WTC11 (cell line): ENCODE measurements at regions of chr5 and their contacts with region 1.

Region 1: GRCh38 chr5:6820851-6821479 is 107.7 kb downstream of the TENT4A start:
- DNase-seq: peak; percentile 83
- ATAC-seq: peak; percentile 77
- H3K4me3 Mint-ChIP-seq: no peak overlapping the region
- H3K27ac Mint-ChIP-seq: no peak overlapping the region
- H3K4me1 Mint-ChIP-seq: peaks cover 17% of the 10 kb centered on the region
- H3K27me3 Mint-ChIP-seq: no peaks in the 10 kb centered on the region; the same call in 1 of the 2 replicates
- CTCF ChIP-seq: peak; percentile 90

Region 2: GRCh38 chr5:6783787-6784186 is 37.2 kb before region 1 on chr5:
- CTCF ChIA-PET with region 1: interaction called, 11 read pairs
- POLR2A ChIA-PET with region 1: no interaction called
- DNase-seq: no peak
- ATAC-seq: no peak
- H3K4me3 Mint-ChIP-seq: no peak overlapping the region
- H3K27ac Mint-ChIP-seq: no peak overlapping the region
- H3K4me1 Mint-ChIP-seq: no peaks in the 10 kb centered on the region
- H3K27me3 Mint-ChIP-seq: no peaks in the 10 kb centered on the region
- CTCF ChIP-seq: no peak

Region 3: GRCh38 chr5:7078901-7079300 is 257.9 kb after region 1 on chr5:
- CTCF ChIA-PET with region 1: interaction called, 44 read pairs
- POLR2A ChIA-PET with region 1: no interaction called
- DNase-seq: peak; percentile 50
- ATAC-seq: peak; percentile 68
- H3K4me3 Mint-ChIP-seq: peak overlapping the region; percentile 25; the same call in 1 of the 2 replicates
- H3K27ac Mint-ChIP-seq: 0 out of 2 replicates have a peak overlapping the region, but pooled peaks have one; percentile 12
- H3K4me1 Mint-ChIP-seq: peaks cover 50% of the 10 kb centered on the region
- H3K27me3 Mint-ChIP-seq: no peaks in the 10 kb centered on the region
- CTCF ChIP-seq: no peak

Region 4: GRCh38 chr5:7754992-7755596 is 934.1 kb after region 1 on chr5:
- CTCF ChIA-PET with region 1: interaction called, 10 read pairs
- POLR2A ChIA-PET with region 1: no interaction called
- DNase-seq: peak; percentile 86
- ATAC-seq: peak; percentile 97
- H3K4me3 Mint-ChIP-seq: no peak overlapping the region
- H3K27ac Mint-ChIP-seq: peak overlapping the region; percentile 73
- H3K4me1 Mint-ChIP-seq: peaks cover 21% of the 10 kb centered on the region
- H3K27me3 Mint-ChIP-seq: no peaks in the 10 kb centered on the region
- CTCF ChIP-seq: peak; percentile 90

Region 5: DNA sequence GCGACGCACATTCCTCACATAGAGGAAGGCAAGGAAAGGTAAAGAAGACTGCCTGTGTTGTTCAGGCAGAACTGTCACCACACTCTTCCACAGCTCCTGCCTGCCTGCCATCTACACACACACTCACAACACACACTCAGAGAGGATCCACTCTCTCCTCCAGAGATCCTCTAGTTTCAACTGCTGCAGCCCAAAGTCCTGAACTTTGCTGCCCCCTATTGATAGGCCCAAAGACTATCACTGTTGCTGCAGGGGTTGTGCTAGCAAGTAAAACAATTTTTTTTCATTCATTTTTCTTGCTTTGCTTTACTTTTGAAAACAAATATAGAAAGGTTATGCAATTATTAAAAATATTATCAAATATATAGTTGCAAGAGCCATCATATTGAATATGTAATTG is 1035.9 kb after region 1 on chr5:
- CTCF ChIA-PET with region 1: interaction called, 32 read pairs
- POLR2A ChIA-PET with region 1: no interaction called
- DNase-seq: peak; percentile 56
- ATAC-seq: peak; percentile 94
- H3K4me3 Mint-ChIP-seq: no peak overlapping the region
- H3K27ac Mint-ChIP-seq: no peak overlapping the region
- H3K4me1 Mint-ChIP-seq: peaks cover 2% of the 10 kb centered on the region; the same call in 1 of the 2 replicates
- H3K27me3 Mint-ChIP-seq: peaks cover 16% of the 10 kb centered on the region
- CTCF ChIP-seq: peak; percentile 66